ENCODE measurements at regions of chr2 and their contacts with region 1.

Region 1: DNA sequence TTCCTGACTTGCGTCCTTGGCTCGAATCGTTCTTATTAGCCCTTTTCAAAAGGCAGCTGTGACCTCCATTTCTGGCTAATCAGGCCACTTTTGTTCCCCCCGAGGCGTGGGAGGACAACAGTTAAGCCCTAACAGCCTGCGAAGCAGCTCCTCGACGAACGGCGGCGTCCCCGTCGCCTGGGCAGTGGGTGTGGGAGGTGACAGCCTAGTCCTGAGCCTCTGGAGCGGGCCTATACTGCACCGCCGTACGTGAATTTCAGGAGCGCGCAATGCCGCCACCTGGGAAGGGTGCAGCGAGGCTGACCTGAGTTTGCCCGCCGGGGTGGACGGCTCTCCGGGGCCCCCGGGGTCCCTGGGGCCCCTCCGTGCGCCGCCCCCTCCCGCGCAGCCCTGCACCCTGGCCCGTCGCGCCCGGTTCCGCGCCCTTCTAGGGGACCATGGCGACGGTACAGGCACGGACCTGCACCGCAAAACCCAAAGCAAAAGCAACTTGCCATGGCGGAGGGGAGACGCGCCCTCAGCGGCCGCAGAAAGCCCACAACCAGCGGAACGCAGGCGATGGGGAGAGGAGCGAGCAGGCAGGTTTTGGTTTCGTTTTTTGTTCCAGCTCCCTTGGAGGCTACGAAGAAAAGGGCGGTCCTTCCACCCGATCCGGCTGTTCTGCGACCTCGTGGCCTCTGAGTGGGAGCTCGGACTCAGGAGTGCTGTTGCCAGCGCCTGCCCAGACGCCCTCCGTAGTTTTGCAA is at the start of gene RBM43:
- DNase-seq: peak; percentile 94
- H3K4me3 Mint-ChIP-seq: peak within 1 kb of the TSS; percentile 82
- H3K27ac Mint-ChIP-seq: peak within 1 kb of the TSS; percentile 84
- H3K4me1 Mint-ChIP-seq: peaks cover 6% of the 10 kb centered on the region
- H3K27me3 Mint-ChIP-seq: no peaks in the 10 kb centered on the region
- CTCF ChIP-seq: no peak
- total RNA-seq, gene RBM43: 3.0 and 3.5 TPM in 2 replicates

Region 2: DNA sequence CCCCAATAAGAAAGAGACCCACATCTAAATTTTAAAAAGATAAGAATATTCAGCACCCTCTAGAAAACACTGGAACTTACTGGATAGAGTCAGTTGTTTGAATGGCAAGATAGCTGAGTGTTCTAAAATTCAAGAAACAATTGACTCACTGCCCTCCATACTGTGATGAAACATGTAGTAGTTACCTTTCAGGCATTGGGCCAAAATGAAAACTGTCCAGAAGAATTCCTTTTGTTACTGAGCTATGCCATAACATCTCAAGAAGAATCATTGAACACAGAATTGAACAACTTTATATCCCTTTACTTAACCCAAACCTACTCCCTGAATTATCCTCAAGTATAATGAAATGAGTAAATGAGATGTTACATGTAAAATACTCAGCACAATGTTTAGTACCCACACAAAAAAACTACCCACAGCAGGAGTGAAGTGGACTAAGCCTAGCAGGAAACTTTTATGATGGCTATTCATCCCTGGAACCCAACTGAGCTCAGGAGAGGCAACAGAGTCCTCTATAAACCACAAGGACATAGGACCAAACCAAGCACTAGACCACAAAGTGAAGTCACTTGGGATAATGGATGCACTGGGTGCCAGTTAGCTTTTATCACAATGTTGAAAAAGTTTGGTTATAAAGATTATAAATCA is 32.4 kb before region 1 on chr2:
- CTCF ChIA-PET with region 1: no interaction called
- POLR2A ChIA-PET with region 1: no interaction called
- intact Hi-C with region 1: no loop called
- DNase-seq: peak; percentile 57
- H3K4me3 Mint-ChIP-seq: no peak overlapping the region
- H3K27ac Mint-ChIP-seq: peak overlapping the region; percentile 35
- H3K4me1 Mint-ChIP-seq: peaks cover 6% of the 10 kb centered on the region
- H3K27me3 Mint-ChIP-seq: no peaks in the 10 kb centered on the region
- CTCF ChIP-seq: no peak

Region 3: GRCh38 chr2:151251012-151251411 is 10.4 kb before region 1 on chr2:
- CTCF ChIA-PET with region 1: interaction called, 3 read pairs
- POLR2A ChIA-PET with region 1: interaction called, 12 read pairs
- intact Hi-C with region 1: no loop called
- DNase-seq: peak; percentile 49
- H3K4me3 Mint-ChIP-seq: no peak overlapping the region
- H3K27ac Mint-ChIP-seq: peak overlapping the region; percentile 84
- H3K4me1 Mint-ChIP-seq: peaks cover 25% of the 10 kb centered on the region
- H3K27me3 Mint-ChIP-seq: no peaks in the 10 kb centered on the region
- CTCF ChIP-seq: no peak

Region 4: GRCh38 chr2:151289369-151290088 is 28.1 kb after region 1 on chr2 and contains the start of gene NMI:
- CTCF ChIA-PET with region 1: interaction called, 3 read pairs
- POLR2A ChIA-PET with region 1: interaction called, 23 read pairs
- intact Hi-C with region 1: no loop called
- DNase-seq: peak; percentile 74
- H3K4me3 Mint-ChIP-seq: peak within 1 kb of the TSS; percentile 84
- H3K27ac Mint-ChIP-seq: peak within 1 kb of the TSS; percentile 98
- H3K4me1 Mint-ChIP-seq: peaks cover 27% of the 10 kb centered on the region
- H3K27me3 Mint-ChIP-seq: no peaks in the 10 kb centered on the region
- CTCF ChIP-seq: no peak
- total RNA-seq, gene NMI: 10.8 and 11.7 TPM in 2 replicates

Region 5: GRCh38 chr2:151409601-151410484 is 148.4 kb after region 1 on chr2 and contains the start of gene RIF1:
- CTCF ChIA-PET with region 1: no interaction called
- POLR2A ChIA-PET with region 1: interaction called, 24 read pairs
- intact Hi-C with region 1: loop called (anchors 5 kb)
- DNase-seq: peak; percentile 95
- H3K4me3 Mint-ChIP-seq: peak within 1 kb of the TSS; percentile 86
- H3K27ac Mint-ChIP-seq: peak within 1 kb of the TSS; percentile 97
- H3K4me1 Mint-ChIP-seq: no peaks in the 10 kb centered on the region
- H3K27me3 Mint-ChIP-seq: no peaks in the 10 kb centered on the region
- CTCF ChIP-seq: peak; percentile 60
- total RNA-seq, gene RIF1: 42.5 and 47.3 TPM in 2 replicates

Region 6: DNA sequence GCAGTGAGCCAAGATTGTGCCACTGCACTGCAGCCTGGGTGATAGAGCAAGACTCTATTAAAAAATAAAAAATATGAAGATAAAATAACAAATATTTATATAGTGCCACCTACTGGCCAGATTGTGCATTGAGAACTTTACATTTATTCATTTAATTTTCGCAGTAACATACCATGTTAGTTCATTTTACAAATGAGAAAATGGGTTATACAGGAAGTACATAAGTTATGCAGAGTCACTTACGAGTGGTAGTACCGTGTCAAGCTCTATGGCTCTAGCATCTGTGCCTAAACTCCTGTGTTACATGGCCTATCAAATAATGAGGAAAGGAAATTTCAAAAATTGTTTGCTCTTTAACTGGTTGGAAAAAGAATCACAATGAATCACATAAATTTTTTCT is 176.2 kb after region 1 on chr2:
- CTCF ChIA-PET with region 1: interaction called, 15 read pairs
- POLR2A ChIA-PET with region 1: interaction called, 6 read pairs
- intact Hi-C with region 1: no loop called
- DNase-seq: peak; percentile 32
- H3K4me3 Mint-ChIP-seq: no peak overlapping the region
- H3K27ac Mint-ChIP-seq: peak overlapping the region; percentile 64
- H3K4me1 Mint-ChIP-seq: no peaks in the 10 kb centered on the region
- H3K27me3 Mint-ChIP-seq: no peaks in the 10 kb centered on the region
- CTCF ChIP-seq: peak; percentile 47

Region 7: DNA sequence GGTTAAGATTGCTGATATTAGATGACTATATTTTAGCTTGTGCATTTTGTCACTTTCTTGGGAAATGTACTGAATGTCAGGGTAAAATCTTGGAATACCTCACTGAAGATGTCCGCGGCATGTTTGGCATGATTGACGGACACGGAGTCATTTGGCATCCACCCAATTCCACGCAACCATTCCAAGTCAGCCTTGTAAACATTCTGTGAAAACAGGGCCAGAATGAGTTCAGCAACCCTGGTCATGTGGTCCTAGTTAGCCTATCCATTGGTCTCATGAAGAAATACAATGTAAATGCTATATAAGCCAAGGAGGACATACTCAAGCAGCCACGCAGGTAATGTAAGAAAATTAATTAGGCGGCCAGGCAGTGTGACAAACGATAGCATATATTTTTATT is 307.8 kb after region 1 on chr2:
- CTCF ChIA-PET with region 1: no interaction called
- POLR2A ChIA-PET with region 1: no interaction called
- intact Hi-C with region 1: no loop called
- DNase-seq: no peak
- H3K4me3 Mint-ChIP-seq: no peak overlapping the region
- H3K27ac Mint-ChIP-seq: no peak overlapping the region
- H3K4me1 Mint-ChIP-seq: no peaks in the 10 kb centered on the region
- H3K27me3 Mint-ChIP-seq: no peaks in the 10 kb centered on the region
- CTCF ChIP-seq: no peak